ENCODE measurements at regions of chr10 and their contacts with region 1.

Region 1: GRCh38 chr10:50417886-50418830 is 166.8 kb upstream of the ASAH2 start:
- DNase-seq: peak; percentile 88
- H3K4me3 Mint-ChIP-seq: peak overlapping the region; percentile 86
- H3K27ac Mint-ChIP-seq: peak overlapping the region; percentile 82
- H3K4me1 Mint-ChIP-seq: peaks cover 45% of the 10 kb centered on the region
- H3K27me3 Mint-ChIP-seq: no peaks in the 10 kb centered on the region

Region 2: DNA sequence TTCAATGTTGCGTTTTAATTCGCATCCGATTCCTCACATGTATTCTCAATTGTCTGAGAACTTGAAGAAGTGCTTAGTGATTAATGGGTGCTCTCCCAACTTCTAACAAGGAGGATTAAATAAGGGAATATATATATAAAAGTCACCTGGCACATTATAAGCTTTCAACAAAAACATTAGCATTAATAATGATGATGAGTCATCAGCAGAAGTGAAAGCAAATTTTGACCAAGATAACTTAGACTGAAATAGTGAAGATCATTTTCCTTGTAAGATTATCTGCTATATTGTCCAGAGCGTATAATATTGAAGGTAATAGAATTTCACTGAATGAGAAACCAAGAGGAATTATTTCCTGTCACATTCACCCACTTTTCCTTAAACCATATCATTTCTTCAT is 175.4 kb before region 1 on chr10:
- intact Hi-C with region 1: no loop called
- DNase-seq: no peak
- H3K4me3 Mint-ChIP-seq: no peak overlapping the region
- H3K27ac Mint-ChIP-seq: no peak overlapping the region
- H3K4me1 Mint-ChIP-seq: no peaks in the 10 kb centered on the region
- H3K27me3 Mint-ChIP-seq: peaks cover 32% of the 10 kb centered on the region

Region 3: GRCh38 chr10:50275650-50276235 is 142.4 kb before region 1 on chr10:
- intact Hi-C with region 1: no loop called
- DNase-seq: peak; percentile 73
- H3K4me3 Mint-ChIP-seq: no peak overlapping the region
- H3K27ac Mint-ChIP-seq: no peak overlapping the region
- H3K4me1 Mint-ChIP-seq: no peaks in the 10 kb centered on the region
- H3K27me3 Mint-ChIP-seq: peaks cover 30% of the 10 kb centered on the region

Region 4: DNA sequence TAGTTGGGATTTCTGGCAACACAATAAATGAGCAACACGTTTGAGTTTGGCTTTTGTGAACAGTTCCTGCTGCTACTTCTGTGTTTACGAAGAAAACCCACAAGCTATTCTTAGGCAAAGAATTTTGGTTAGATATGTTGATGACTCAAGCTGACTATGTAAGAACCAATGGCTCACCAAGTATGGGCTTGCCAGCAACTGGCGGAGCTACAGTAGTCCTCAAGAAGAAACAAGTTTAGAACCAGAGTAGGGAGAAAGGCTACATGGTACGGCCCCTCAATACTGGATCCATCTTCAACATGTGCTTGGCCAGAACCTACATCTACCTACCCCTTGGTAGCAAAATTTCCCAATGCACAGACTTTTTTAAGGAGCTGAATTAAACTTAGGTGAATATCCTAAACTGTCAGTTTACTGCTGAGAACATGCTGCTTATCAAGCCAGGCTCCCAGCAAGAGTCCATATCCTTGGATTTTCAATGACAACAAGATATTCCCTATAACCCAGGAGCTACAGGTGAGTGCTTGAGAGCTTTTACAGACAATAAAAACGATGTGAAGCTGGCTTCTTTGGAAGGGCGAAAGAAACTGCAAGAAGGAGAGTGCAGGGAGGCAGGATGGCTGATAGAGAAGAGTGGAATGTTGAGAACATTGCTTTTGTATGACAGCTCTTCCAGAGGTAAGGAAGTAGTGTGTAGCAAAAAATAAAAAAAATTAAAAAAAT is 92.5 kb before region 1 on chr10:
- intact Hi-C with region 1: loop called (anchors 5 kb)
- DNase-seq: peak; percentile 74
- H3K4me3 Mint-ChIP-seq: peak overlapping the region; percentile 57
- H3K27ac Mint-ChIP-seq: peak overlapping the region; percentile 39
- H3K4me1 Mint-ChIP-seq: peaks cover 47% of the 10 kb centered on the region
- H3K27me3 Mint-ChIP-seq: no peaks in the 10 kb centered on the region

Region 5: GRCh38 chr10:50367732-50368131 is 50.4 kb before region 1 on chr10:
- intact Hi-C with region 1: loop called (anchors 5 kb)
- DNase-seq: peak; percentile 63
- H3K4me3 Mint-ChIP-seq: no peak overlapping the region
- H3K27ac Mint-ChIP-seq: no peak overlapping the region
- H3K4me1 Mint-ChIP-seq: peaks cover 7% of the 10 kb centered on the region
- H3K27me3 Mint-ChIP-seq: no peaks in the 10 kb centered on the region